ENCODE measurements at regions of chr16 and their contacts with region 1.

Region 1: DNA sequence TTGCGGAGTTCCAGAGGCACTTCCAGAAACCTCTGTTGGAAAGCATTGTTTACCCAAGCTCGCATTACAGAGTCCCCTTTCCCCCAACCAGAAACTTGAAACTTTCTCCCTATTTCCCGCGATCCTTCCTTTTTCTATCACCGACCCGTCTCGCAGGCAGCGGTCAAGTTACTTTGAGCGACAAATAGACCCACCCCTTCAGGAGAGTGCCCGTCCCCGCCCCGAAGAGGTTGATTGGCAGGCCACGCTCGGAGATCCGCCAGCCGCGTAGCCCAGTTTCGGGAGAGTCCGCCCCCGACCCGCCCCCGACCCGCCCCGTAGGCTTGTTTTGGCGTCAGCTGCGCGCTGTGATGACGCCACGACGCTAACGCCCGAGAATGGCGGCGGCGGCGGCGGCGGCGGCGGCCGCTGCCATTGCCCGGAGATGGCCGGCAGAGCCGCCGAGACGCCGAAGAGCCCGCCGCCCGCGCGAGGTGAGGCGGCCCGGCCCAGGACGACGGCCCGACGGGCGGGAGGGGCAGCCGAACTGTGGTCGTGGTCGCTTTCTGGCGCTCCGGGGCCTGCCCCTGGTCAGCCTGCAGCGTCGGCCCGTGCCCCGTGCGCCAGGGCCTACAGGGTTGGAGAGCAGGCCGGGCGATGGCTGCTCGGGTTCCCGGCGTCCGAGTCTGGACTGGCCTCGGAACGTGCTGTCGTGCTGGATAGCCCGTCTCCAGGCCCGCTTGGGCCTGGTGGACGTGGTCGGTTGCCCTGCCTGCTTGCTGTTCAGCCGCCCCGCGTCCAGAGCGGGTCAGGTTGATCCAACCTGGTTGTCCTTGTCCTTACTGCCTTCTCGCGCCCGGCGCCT is at the start of gene PSKH1:
- DNase-seq: peak; percentile 88
- H3K4me3 Mint-ChIP-seq: peak within 1 kb of the TSS; percentile 98
- H3K27ac Mint-ChIP-seq: peak within 1 kb of the TSS; percentile 96
- H3K4me1 Mint-ChIP-seq: peaks cover 20% of the 10 kb centered on the region
- H3K27me3 Mint-ChIP-seq: no peaks in the 10 kb centered on the region
- total RNA-seq, gene PSKH1: 17.8 TPM in 2 replicates

Region 2: GRCh38 chr16:67660564-67661028 is 232.5 kb before region 1 on chr16 and contains the start of gene PARD6A:
- intact Hi-C with region 1: loop called (anchors 1 kb)
- DNase-seq: peak; percentile 96
- H3K4me3 Mint-ChIP-seq: peak within 1 kb of the TSS; percentile 92
- H3K27ac Mint-ChIP-seq: peak within 1 kb of the TSS; percentile 97
- H3K4me1 Mint-ChIP-seq: peaks cover 20% of the 10 kb centered on the region
- H3K27me3 Mint-ChIP-seq: no peaks in the 10 kb centered on the region
- total RNA-seq, gene PARD6A: 13.4 and 16.1 TPM in 2 replicates

Region 3: DNA sequence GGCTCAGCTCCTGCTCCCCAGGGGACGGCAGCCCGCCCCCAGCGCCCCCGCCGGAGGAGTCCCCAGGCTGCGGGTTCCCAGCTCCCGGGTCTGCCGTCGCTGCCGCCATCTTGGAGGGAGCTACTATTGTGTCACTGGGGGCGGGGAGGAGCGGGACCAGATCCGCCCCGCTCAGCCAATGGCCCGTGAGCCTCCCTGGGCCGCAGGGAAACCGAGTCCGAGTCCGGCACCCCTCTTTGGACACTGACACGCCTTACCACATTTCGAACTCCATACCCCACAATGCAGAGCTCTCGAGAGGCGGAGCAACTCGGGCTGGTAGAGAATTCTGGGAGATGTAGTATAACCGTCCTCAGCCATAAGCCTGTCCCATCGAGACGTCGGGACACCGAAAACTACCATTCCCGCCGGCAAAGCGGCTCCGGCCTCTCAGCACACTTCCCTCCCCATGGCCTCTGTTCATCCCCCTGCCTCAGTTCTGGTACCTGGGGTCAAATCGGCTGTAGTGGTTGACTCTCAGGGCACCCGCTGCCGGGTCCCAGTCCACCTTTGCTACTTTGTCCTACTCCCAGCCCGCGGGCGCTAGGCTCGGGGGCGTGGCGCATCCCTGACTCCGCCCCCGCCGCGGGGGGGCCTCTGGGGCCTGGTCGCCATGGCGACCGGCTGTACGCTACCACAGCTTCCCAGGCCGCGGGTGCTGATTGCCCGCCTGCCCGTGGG is 86.5 kb before region 1 on chr16 and contains the starts of genes RANBP10 and TSNAXIP1:
- intact Hi-C with region 1: loop called (anchors 1 kb)
- DNase-seq: peak; percentile 96
- H3K4me3 Mint-ChIP-seq: peak within 1 kb of the TSS; percentile 90
- H3K27ac Mint-ChIP-seq: peak within 1 kb of the TSS; percentile 86
- H3K4me1 Mint-ChIP-seq: peaks cover 35% of the 10 kb centered on the region
- H3K27me3 Mint-ChIP-seq: peaks cover 3% of the 10 kb centered on the region
- total RNA-seq, gene RANBP10: 23.0 and 25.7 TPM in 2 replicates
- total RNA-seq, gene TSNAXIP1: 0.52 and 0.83 TPM in 2 replicates

Region 4: GRCh38 chr16:67917852-67918236 is 24.7 kb after region 1 on chr16:
- intact Hi-C with region 1: loop called (anchors 2 kb)
- DNase-seq: no peak
- H3K4me3 Mint-ChIP-seq: no peak overlapping the region
- H3K27ac Mint-ChIP-seq: peak overlapping the region; percentile 73
- H3K4me1 Mint-ChIP-seq: peaks cover 27% of the 10 kb centered on the region
- H3K27me3 Mint-ChIP-seq: no peaks in the 10 kb centered on the region

Region 5: DNA sequence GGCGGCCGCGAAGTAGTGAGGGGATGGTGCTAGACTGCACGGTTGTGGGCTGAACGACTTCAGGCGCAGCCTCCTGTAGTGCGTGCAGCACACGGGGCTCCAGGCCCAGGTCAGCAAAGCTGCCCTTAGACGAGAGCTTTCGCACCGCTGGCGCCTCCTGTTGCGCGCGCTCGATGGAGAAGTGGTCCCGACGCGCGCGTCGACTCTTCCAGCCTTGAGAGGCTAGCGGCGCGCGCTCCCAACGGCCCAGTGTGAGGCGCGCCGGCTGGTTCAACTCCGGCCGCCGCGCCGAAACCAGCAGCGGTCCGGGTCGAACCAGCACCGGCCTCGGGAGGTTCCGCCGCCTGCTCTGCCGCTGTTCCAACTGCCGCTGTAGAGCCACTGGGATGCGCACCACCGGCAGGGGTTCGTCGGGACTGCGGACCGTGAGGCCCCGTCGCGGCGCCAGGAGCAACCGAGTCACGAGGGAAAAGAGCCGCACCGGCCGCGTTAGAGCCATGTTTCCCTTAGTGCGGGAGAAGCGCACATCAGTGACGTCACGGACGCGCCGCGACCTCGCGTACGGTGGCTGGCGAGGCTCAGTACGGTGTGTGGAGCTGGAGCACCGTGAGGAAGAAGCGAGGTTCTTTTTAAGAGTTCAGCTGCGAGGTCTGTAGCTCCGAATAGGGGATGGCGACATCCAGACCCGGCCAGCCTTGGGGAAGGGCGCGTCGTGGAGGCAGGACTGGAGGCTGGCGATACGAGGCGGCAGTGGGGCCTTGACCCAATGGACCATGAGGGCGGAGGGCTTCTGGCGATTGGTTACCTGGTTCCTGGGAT is 129.8 kb after region 1 on chr16 and contains the starts of genes DDX28 and DUS2:
- intact Hi-C with region 1: loop called (anchors 1 kb)
- DNase-seq: peak; percentile 93
- H3K4me3 Mint-ChIP-seq: peak within 1 kb of the TSS; percentile 100
- H3K27ac Mint-ChIP-seq: peak within 1 kb of the TSS; percentile 96
- H3K4me1 Mint-ChIP-seq: peaks cover 26% of the 10 kb centered on the region
- H3K27me3 Mint-ChIP-seq: no peaks in the 10 kb centered on the region
- total RNA-seq, gene DDX28: 28.2 and 28.4 TPM in 2 replicates
- total RNA-seq, gene DUS2: 34.7 and 37.2 TPM in 2 replicates

Region 6: GRCh38 chr16:68085259-68086071 is 192.3 kb after region 1 on chr16 and contains the start of gene NFATC3:
- intact Hi-C with region 1: loop called (anchors 1 kb)
- DNase-seq: peak; percentile 97
- H3K4me3 Mint-ChIP-seq: peak within 1 kb of the TSS; percentile 95
- H3K27ac Mint-ChIP-seq: peak within 1 kb of the TSS; percentile 96
- H3K4me1 Mint-ChIP-seq: peaks cover 73% of the 10 kb centered on the region
- H3K27me3 Mint-ChIP-seq: no peaks in the 10 kb centered on the region
- total RNA-seq, gene NFATC3: 152 and 157 TPM in 2 replicates